ENCODE measurements at regions of chrX and their contacts with region 1.

Region 1: DNA sequence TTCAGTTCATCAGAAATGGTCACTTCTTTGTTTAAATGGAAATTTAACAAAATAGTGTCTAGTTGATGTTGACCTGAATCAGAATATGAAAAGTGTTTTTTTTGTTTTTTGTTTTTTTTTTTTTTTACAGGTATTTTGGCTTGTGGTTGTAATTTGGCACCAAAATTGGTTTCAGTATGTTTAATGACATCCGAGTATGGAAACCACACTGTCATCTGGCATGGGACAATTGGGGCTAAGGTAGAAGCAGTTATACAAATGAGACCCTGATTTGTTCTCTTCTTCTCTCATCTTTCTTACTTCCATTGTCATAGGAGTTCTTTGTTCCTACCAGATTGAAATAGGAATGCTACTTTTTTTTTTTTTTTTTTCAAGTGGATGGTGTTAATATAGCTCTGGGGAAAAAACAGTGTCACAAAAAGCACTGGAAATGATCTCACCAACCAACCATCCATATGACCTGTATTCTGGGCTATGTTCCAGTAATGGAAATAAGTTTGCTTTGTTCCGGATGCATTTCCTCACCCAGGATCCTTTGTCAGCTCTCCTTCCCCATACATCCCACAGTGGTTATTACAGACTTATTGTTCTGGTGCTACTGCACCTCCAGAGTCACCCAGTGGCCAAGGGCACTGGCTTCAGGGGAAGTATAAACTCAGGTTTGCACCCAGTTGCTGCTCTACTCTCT is 95.8 kb downstream of the ATXN3L start:
- DNase-seq: no peak
- H3K4me3 ChIP-seq: no peak overlapping the region
- H3K27ac ChIP-seq: no peak overlapping the region
- H3K4me1 ChIP-seq: no peaks in the 10 kb centered on the region
- CTCF ChIP-seq: no peak

Region 2: GRCh38 chrX:13167481-13168231 is 56.4 kb before region 1 on chrX:
- CTCF ChIA-PET with region 1: no interaction called
- POLR2A ChIA-PET with region 1: no interaction called
- intact Hi-C with region 1: loop called (anchors 10 kb)
- DNase-seq: peak; percentile 4
- H3K4me3 ChIP-seq: no peak overlapping the region
- H3K27ac ChIP-seq: no peak overlapping the region
- H3K4me1 ChIP-seq: no peaks in the 10 kb centered on the region
- CTCF ChIP-seq: no peak

Region 3: GRCh38 chrX:13473442-13474163 is 249.6 kb after region 1 on chrX:
- CTCF ChIA-PET with region 1: no interaction called
- POLR2A ChIA-PET with region 1: no interaction called
- intact Hi-C with region 1: no loop called
- DNase-seq: peak; percentile 22
- H3K4me3 ChIP-seq: peak overlapping the region; percentile 16
- H3K27ac ChIP-seq: no peak overlapping the region
- H3K4me1 ChIP-seq: peaks cover 15% of the 10 kb centered on the region
- CTCF ChIP-seq: no peak

Region 4: DNA sequence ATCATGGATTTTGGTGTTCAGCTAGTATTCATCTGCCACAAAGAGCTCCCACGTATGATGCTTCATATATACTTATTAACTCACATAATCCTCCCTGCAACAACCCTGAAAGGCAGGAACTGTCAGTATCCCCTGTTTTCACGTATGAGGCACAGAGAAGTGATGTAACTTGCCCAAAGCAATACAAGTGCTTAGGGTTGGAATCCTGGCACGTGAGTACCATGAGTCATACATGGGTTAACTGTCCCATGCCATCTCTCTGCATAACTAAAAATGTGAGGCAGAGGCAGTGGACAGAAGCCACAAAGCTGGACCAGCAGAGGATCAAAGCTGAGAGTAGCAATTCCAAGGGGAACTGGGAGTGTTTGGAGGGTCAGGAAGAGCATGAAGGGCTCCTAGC is 309.7 kb after region 1 on chrX:
- CTCF ChIA-PET with region 1: no interaction called
- POLR2A ChIA-PET with region 1: no interaction called
- intact Hi-C with region 1: no loop called
- DNase-seq: no peak
- H3K4me3 ChIP-seq: no peak overlapping the region
- H3K27ac ChIP-seq: no peak overlapping the region
- H3K4me1 ChIP-seq: no peaks in the 10 kb centered on the region
- CTCF ChIP-seq: no peak